ENCODE measurements at regions of chr6 and their contacts with region 1.

Region 1: GRCh38 chr6:22828179-22829062 is 259.1 kb downstream of the HDGFL1 start:
- DNase-seq: peak; percentile 97
- ATAC-seq: peak; percentile 55
- H3K4me3 ChIP-seq: peak overlapping the region; percentile 42
- H3K27ac ChIP-seq: peak overlapping the region; percentile 77
- H3K4me1 ChIP-seq: peaks cover 42% of the 10 kb centered on the region
- H3K27me3 ChIP-seq: no peaks in the 10 kb centered on the region
- CTCF ChIP-seq: peak; percentile 94

Region 2: GRCh38 chr6:22363714-22364239 is 464.6 kb before region 1 on chr6:
- CTCF ChIA-PET with region 1: no interaction called
- POLR2A ChIA-PET with region 1: no interaction called
- intact Hi-C with region 1: loop called (anchors 1 kb)
- DNase-seq: no peak
- ATAC-seq: no peak; the same call in 1 of the 2 replicates
- H3K4me3 ChIP-seq: 0 out of 2 replicates have a peak overlapping the region, but pooled peaks have one; percentile 10
- H3K27ac ChIP-seq: peak overlapping the region; percentile 94
- H3K4me1 ChIP-seq: peaks cover 44% of the 10 kb centered on the region
- H3K27me3 ChIP-seq: no peaks in the 10 kb centered on the region
- CTCF ChIP-seq: no peak

Region 3: GRCh38 chr6:22471132-22471690 is 357.2 kb before region 1 on chr6:
- CTCF ChIA-PET with region 1: no interaction called
- POLR2A ChIA-PET with region 1: no interaction called
- intact Hi-C with region 1: loop called (anchors 5 kb)
- DNase-seq: peak; percentile 89
- ATAC-seq: peak; percentile 95
- H3K4me3 ChIP-seq: 0 out of 2 replicates have a peak overlapping the region, but pooled peaks have one; percentile 7
- H3K27ac ChIP-seq: peak overlapping the region; percentile 40
- H3K4me1 ChIP-seq: peaks cover 27% of the 10 kb centered on the region
- H3K27me3 ChIP-seq: no peaks in the 10 kb centered on the region
- CTCF ChIP-seq: peak; percentile 55

Region 4: DNA sequence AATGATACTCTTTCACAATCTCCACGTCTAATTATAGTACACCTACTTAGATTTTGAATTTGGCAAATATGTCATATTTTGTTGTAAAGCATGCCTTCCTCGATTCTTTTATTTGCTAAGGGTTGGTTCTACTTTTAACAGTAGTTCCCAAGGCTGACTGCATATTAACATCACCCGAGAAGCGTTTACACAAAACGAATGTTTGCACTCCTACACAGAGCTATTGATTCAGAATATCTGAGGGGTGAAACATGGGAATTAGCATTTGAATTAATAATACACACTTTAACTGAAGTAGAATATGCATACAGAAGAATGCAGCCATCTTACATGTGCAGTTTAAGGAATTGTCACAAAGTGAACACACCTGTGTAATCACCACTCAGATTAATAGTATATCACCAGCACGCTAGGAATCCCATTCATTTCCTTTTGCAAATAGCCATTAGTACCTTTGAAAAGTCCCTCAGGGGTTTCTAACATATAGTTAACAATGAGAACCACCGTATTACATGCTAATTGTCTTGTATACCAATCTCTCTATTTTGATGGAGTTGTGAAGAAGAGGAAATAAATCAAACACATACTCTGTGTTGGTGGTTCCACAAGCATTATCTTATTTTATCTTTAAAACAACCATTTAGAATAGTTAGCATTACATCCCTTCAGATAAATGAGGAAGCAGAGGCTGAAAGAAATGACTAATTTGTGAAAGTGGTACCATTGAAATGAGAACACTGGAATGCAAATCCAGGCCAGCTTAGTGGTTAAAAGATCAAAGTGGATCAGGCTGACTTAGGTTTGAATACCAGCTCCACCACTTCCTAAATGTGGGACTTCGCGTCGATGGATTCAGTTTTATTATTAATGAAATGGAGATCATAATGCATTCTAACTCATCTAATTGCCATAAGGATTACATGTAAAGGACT is 58.5 kb after region 1 on chr6:
- CTCF ChIA-PET with region 1: no interaction called
- POLR2A ChIA-PET with region 1: no interaction called
- intact Hi-C with region 1: loop called (anchors 5 kb)
- DNase-seq: peak; percentile 38
- ATAC-seq: peak; percentile 87
- H3K4me3 ChIP-seq: no peak overlapping the region
- H3K27ac ChIP-seq: peak overlapping the region; percentile 27
- H3K4me1 ChIP-seq: peaks cover 31% of the 10 kb centered on the region
- H3K27me3 ChIP-seq: no peaks in the 10 kb centered on the region
- CTCF ChIP-seq: no peak

Region 5: GRCh38 chr6:22966691-22967422 is 138.4 kb after region 1 on chr6:
- CTCF ChIA-PET with region 1: no interaction called
- POLR2A ChIA-PET with region 1: no interaction called
- intact Hi-C with region 1: no loop called
- DNase-seq: no peak
- ATAC-seq: peak; percentile 38; the same call in 1 of the 2 replicates
- H3K4me3 ChIP-seq: no peak overlapping the region
- H3K27ac ChIP-seq: no peak overlapping the region
- H3K4me1 ChIP-seq: no peaks in the 10 kb centered on the region
- H3K27me3 ChIP-seq: no peaks in the 10 kb centered on the region
- CTCF ChIP-seq: no peak

Region 6: GRCh38 chr6:23280437-23280836 is 452.0 kb after region 1 on chr6:
- CTCF ChIA-PET with region 1: no interaction called
- POLR2A ChIA-PET with region 1: no interaction called
- intact Hi-C with region 1: no loop called
- DNase-seq: no peak
- ATAC-seq: no peak
- H3K4me3 ChIP-seq: no peak overlapping the region
- H3K27ac ChIP-seq: no peak overlapping the region
- H3K4me1 ChIP-seq: no peaks in the 10 kb centered on the region
- H3K27me3 ChIP-seq: no peaks in the 10 kb centered on the region
- CTCF ChIP-seq: no peak

Region 7: GRCh38 chr6:23414051-23414446 is 585.6 kb after region 1 on chr6:
- CTCF ChIA-PET with region 1: no interaction called
- POLR2A ChIA-PET with region 1: no interaction called
- intact Hi-C with region 1: loop called (anchors 5 kb)
- DNase-seq: peak; percentile 70
- ATAC-seq: peak; percentile 92
- H3K4me3 ChIP-seq: no peak overlapping the region
- H3K27ac ChIP-seq: peak overlapping the region; percentile 54
- H3K4me1 ChIP-seq: peaks cover 18% of the 10 kb centered on the region
- H3K27me3 ChIP-seq: no peaks in the 10 kb centered on the region
- CTCF ChIP-seq: peak; percentile 66